Left cardiac atrium (tissue), 4 donors: ENCODE measurements at regions of chr3 and their contacts with region 1.

Region 1: DNA sequence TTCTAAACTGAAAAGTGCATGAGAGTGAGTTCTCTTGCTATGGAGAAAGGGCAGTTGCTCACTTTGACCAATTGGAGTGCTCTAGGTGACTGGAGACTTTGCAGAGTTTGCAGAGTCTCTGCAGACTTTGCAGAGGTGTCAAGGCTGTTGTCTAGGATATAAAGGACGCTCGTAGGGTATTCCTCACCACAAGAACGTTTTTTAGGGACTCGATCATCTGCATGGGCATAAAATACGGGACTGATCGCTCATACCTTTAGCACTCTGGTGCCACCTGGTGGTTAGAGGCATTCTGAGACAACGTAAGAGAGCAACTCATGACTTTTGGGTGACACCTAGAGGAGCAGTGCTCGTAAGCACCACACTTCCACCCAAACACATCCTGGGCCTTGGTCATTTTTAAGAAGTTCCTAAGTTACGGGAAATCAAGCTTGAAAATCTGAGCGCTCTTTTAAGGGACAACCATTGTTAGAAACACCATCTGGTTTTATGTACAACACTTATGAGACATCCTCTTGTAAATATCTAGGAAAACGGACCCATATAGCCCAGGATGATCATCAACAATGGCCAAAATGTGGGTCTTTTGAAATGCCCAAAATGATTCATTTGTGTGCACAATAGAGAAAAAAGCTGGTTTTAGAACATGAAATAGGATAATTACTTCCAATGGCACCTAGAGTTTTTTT is 51.6 kb upstream of the XCR1 start:
- DNase-seq: peak; percentile 92
- ATAC-seq: peak; percentile 95 to 97

Region 2: DNA sequence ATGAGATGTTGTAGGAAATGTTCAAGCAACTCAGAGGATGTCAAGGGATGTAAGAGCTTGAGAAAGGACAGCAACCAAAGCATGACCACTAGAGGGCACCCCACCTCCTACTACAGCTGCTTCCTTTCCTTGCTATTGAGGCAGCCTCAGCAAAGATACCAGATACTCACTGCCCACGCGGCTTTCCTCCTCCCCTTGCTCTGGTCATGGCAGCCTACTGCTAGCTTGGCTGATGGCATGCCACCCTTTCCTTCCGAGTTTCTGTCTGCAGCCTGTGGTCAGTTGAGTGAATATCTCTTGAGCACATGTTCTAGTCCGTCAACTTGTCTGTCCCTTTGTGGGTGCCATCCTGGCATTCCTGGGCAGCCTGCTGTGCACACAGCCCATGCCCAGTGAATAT is 140.0 kb before region 1 on chr3:
- intact Hi-C with region 1: loop called (anchors 1 to 5 kb)
- DNase-seq: peak; percentile 84
- ATAC-seq: peak; percentile 88 to 91

Region 3: DNA sequence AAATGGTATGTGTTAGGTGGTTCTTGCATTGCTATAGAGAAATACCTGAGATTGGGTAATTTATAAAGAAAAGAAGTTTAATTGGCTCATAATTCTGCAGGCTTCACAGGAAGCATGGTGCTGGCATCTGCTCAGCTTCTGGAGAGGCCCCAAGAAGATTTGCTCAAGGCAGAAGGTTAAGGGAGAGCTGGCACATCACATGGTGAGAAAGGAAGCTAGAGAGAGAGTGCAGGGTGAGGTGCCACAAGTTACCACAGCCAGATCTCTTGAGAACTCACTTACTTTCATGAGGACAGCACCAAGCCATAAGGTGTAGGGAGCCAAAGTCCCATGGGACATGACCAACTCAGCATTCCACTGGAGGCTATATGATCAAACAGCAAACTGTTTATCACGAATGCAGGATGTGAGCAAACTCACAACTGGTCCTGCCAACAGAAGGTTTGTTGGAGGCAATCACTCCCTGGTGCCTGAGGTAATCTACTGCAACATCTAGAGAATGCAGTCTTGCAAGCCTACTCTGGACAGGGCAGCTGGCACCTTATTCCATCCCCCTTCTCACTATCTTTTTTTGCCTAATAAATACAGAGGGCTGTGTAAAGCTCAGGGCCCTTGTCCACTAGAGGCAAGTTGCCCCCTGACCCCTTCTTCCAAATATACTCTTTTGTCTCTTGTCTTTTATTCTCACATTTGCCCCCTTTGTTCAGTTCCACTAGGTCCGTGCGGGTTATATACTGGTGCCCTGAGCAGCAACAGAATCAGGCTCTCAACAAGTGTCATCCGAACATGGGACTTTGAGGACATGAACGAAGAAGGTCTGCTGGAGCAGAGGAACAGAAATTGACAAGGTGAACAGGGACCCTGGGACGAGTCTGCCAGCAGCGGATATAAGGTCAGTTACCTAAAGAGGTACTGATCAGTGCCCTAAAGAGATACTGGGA is 247.1 kb after region 1 on chr3:
- intact Hi-C with region 1: no loop called
- DNase-seq: no peak
- ATAC-seq: peak; percentile 38 to 53